ENCODE measurements at regions of chr15 and their contacts with region 1.

Region 1: GRCh38 chr15:52805351-52806283 is 15.5 kb upstream of the ONECUT1 start:
- DNase-seq: no peak
- ATAC-seq: peak; percentile 27
- H3K4me3 Mint-ChIP-seq: peak overlapping the region; percentile 27
- H3K27ac Mint-ChIP-seq: no peak overlapping the region
- H3K4me1 Mint-ChIP-seq: peaks cover 15% of the 10 kb centered on the region
- H3K27me3 Mint-ChIP-seq: peaks cover 74% of the 10 kb centered on the region
- CTCF ChIP-seq: peak; percentile 36

Region 2: DNA sequence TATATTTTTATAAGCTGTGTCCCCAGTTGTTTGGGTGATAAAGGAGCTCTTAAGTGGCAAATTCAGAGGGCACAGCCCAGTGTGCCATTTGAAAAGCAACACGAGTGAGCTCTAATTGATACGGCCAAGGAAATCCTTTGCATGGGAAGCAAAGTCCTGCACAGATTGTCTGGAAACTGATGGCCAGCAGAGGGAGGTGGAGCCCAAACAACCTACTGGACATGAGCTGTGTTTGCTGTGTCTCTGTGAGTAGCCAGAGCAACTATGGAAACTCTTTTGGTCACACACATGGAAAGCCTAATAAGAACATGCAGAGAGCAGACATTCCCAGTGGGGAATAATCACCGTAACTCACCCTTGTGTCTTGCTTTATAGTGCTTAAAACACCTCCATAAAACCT is 39.8 kb before region 1 on chr15:
- CTCF ChIA-PET with region 1: no interaction called
- POLR2A ChIA-PET with region 1: no interaction called
- intact Hi-C with region 1: no loop called
- DNase-seq: no peak
- ATAC-seq: no peak
- H3K4me3 Mint-ChIP-seq: no peak overlapping the region
- H3K27ac Mint-ChIP-seq: no peak overlapping the region
- H3K4me1 Mint-ChIP-seq: no peaks in the 10 kb centered on the region
- H3K27me3 Mint-ChIP-seq: peaks cover 34% of the 10 kb centered on the region
- CTCF ChIP-seq: no peak

Region 3: DNA sequence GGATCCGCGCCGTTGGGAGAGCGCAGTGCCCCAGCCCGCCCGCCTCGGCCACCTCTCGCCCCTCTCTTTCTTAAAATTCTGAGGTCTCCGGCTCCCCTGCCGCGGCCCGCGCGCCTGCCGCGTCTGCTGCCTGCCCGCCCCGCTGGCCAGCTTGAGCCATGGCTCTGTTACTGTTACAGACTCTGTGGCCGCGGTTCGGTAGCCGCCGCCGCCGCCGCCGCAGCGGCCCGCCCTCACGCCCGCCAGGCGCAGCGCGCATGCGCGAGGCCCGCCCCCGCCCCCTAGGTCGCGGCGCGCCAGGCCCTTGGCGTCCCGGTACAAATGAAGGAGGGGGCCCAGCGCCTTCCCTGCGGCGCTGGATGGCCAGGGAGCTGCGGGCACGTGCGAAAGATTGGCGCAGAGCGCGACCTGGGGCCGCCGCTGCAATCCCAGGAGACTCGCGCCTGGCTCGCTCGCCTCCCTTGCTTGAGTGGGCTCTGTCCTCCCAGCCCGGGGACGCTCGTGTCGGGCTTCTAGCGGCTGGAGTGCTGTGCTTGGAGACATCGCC is 15.4 kb before region 1 on chr15 and contains the start of gene ONECUT1:
- CTCF ChIA-PET with region 1: interaction called, 12 read pairs
- POLR2A ChIA-PET with region 1: interaction called, 5 read pairs
- intact Hi-C with region 1: no loop called
- DNase-seq: peak; percentile 48
- ATAC-seq: peak; percentile 62
- H3K4me3 Mint-ChIP-seq: peak within 1 kb of the TSS; percentile 56
- H3K27ac Mint-ChIP-seq: no peak within 1 kb of the TSS
- H3K4me1 Mint-ChIP-seq: peaks cover 16% of the 10 kb centered on the region
- H3K27me3 Mint-ChIP-seq: peaks cover 82% of the 10 kb centered on the region
- CTCF ChIP-seq: no peak
- total RNA-seq, gene ONECUT1: not detected

Region 4: GRCh38 chr15:53312707-53313106 is 507.1 kb after region 1 on chr15:
- CTCF ChIA-PET with region 1: no interaction called
- POLR2A ChIA-PET with region 1: no interaction called
- intact Hi-C with region 1: no loop called
- DNase-seq: no peak
- ATAC-seq: no peak
- H3K4me3 Mint-ChIP-seq: no peak overlapping the region
- H3K27ac Mint-ChIP-seq: no peak overlapping the region
- H3K4me1 Mint-ChIP-seq: no peaks in the 10 kb centered on the region
- H3K27me3 Mint-ChIP-seq: no peaks in the 10 kb centered on the region
- CTCF ChIP-seq: no peak